Pancreas (tissue), 10 donors: ENCODE measurements at regions of chr14 and their contacts with region 1.

Region 1: DNA sequence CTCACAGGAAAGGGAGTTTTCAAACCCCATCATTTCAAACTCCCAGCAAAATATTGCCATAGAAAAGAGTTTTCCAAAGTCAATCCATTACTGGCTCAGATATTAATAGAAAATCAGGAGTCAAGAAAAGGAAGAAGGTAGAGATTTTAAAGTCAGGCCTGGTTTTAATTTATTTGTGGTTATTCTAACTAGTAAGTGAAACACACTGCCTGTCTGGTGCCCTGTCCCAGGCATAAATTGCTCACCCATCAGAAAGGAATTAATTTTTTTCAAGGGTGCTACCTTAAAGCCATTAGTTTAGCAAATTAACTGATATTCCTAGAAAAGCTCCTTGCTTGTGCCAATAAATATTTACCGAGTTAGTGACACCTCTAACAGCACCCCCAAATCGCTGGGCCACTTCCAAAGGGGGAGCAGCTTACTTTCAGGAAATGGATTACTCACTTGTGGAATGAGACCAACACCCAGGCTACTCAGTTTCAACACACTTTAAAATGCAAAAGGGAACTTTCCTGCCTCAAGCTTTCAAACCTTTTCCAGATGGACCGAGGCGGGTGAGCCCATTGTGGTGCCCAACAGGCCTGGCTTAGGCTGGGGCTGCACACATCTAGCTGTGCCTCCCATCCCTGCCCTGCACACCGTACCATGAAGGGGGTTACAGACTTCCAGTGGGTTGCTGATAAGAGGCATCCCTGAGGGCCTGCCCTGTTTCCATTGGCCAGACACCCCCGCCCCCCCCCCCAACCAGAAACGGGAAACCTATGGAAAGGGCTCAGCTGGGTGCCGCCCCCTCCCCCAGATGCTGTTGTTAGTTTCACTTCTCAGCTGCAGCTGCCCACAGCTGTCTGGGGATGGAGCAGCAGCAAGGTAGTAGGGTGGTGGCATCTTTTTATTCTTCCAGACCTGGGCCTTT is 117.2 kb downstream of the SAMD4A start:
- DNase-seq: peak in 1 of 6 donors; percentile 24
- ATAC-seq: peak in 3 of 4 donors; percentile 31 to 41 (median 36)
- H3K4me3 ChIP-seq: no peak overlapping the region
- H3K27ac ChIP-seq: no peak overlapping the region
- H3K4me1 ChIP-seq: peaks cover 0 to 3% (median 0%) of the 10 kb centered on the region in 3 donors
- H3K27me3 ChIP-seq: no peaks in the 10 kb centered on the region
- CTCF ChIP-seq: no peak

Region 2: DNA sequence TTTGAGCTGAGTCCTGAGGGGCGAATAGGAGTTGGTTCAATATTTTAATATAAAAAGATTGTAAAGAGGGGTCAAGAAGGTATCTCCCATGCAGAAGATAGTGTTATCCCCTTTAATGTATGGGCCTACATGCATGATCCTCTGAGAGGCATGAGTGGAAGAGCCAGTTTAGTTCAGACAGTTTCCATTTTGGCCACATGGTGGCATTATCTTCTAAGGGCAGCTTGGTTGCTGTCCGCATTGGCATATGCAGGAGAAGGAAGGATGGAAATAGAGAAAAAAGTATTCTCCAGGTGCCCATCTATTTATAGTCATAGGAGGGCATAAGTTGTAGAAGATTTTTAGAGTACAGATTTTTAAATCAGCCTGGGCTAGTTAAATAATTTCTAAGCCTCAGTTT is 111.8 kb before region 1 on chr14:
- intact Hi-C with region 1: loop called in 2 of 3 experiments (anchors 5 to 10 kb)
- DNase-seq: no peak
- ATAC-seq: no peak
- H3K4me3 ChIP-seq: no peak overlapping the region
- H3K27ac ChIP-seq: no peak overlapping the region
- H3K4me1 ChIP-seq: peaks cover 0 to 4% (median 0%) of the 10 kb centered on the region in 3 donors
- H3K27me3 ChIP-seq: no peaks in the 10 kb centered on the region
- CTCF ChIP-seq: no peak

Region 3: DNA sequence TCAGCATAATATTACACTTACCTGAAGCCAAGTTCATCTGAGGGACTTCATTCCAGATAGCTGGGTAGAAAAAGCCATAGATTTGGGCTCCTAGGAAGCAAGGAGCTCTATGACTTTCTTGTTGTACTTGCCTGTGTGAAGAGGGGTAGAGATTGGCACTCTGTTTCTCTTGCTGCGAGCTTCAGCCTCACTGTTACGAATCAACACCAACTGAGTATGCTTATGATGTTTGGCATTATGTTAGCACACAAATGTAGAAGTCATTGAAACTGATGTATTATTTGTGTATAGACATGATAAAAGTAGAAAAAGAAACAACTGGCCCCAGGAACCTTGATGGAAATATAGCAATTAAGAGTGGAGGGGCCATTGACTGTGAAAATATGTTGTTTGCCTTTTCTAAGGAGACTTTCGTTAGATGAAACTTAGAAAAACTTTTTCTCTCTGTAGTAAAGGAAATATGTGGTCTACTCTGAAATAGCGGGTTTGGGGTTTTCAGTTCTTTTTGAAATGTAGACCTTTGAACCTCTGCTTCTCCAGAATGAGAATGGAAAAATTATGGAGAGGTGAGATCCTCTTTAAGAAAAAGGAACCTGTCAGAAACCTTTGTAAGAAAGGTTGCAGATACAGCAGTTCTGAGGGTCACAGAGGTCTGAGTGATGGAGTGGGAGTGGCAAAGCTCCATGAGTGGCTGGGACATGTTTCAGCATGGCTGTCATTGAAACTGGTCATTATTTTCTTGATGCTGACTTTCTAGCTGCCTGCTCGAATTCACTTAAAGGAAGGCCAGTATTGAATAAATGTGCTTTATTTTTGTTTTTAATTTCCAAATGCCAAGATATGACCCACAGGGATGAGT is 58.6 kb after region 1 on chr14:
- intact Hi-C with region 1: no loop called
- DNase-seq: no peak
- ATAC-seq: no peak
- H3K4me3 ChIP-seq: no peak overlapping the region
- H3K27ac ChIP-seq: no peak overlapping the region
- H3K4me1 ChIP-seq: no peaks in the 10 kb centered on the region
- H3K27me3 ChIP-seq: no peaks in the 10 kb centered on the region
- CTCF ChIP-seq: no peak

Region 4: DNA sequence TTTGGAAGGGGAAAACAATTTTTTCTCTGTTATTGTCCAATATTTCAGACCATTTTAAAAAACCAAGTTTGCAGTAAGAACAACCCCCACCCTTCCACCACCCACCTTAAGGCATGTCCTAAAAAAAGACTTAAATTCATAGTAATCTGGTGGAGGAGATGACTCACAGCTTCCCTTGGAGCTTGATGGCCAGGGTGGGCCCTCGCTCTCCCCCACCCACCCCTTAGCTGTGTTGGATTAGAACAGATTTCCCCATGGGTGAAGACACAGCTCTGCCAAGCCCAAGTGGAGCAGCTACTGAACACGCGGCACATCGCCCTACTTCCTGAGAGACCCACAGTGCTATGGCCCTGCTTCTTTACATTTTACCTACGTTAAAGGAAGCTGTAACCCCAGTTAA is 78.2 kb after region 1 on chr14:
- intact Hi-C with region 1: loop called in 1 of 3 experiments (anchors 10 kb)
- DNase-seq: no peak
- ATAC-seq: no peak
- H3K4me3 ChIP-seq: no peak overlapping the region
- H3K27ac ChIP-seq: no peak overlapping the region
- H3K4me1 ChIP-seq: no peaks in the 10 kb centered on the region
- H3K27me3 ChIP-seq: no peaks in the 10 kb centered on the region
- CTCF ChIP-seq: no peak

Region 5: DNA sequence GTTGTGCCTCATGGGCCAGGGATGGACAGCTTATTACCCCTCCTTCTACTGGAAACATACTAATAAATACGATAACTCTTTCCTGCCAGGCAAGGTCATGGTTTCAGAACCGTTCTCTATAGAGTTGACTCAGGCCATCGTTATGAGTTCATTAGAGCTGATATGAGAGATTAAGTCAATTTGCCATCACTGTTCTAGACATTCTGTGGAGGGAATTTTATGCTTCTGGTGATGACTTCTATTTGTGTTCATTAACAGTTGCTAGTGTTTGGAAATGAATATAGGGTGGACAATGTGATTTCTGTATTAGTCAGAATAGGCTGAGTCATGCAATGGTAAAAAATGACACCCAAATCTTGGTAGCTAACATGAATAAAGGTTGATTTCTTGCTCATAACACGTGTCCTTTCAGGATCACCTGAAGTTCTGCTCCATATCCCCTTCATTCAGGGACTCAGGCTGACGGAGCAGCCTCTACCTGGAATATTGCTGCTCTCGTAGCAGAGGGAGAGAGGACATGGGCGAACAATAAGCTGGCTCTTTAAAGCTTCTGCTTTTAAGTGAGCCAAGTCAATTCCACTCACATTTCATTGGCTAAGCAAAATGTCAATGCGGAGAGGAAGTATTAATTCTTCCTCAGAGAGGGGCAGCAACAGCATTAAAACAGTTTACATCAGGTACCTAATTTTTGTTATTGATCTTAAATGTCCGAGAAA is 774.8 kb after region 1 on chr14:
- intact Hi-C with region 1: no loop called
- DNase-seq: no peak
- ATAC-seq: no peak
- H3K4me3 ChIP-seq: no peak overlapping the region
- H3K27ac ChIP-seq: no peak overlapping the region
- H3K4me1 ChIP-seq: peaks cover 7 to 10% (median 10%) of the 10 kb centered on the region in 3 donors
- H3K27me3 ChIP-seq: no peaks in the 10 kb centered on the region
- CTCF ChIP-seq: no peak